Vagina (tissue), 2 donors: ENCODE measurements at regions of chr4 and their contacts with region 1.

Region 1: GRCh38 chr4:25234390-25235370 is 847 bp downstream of the PI4K2B start:
- DNase-seq: no peak
- H3K4me3 ChIP-seq: peak overlapping the region; percentile 73 to 97
- H3K27ac ChIP-seq: peak overlapping the region; percentile 99
- H3K4me1 ChIP-seq: peaks cover 14% of the 10 kb centered on the region
- H3K27me3 ChIP-seq: no peaks in the 10 kb centered on the region
- CTCF ChIP-seq: peak in 2 of 3 experiments; percentile 2 to 47
- POLR2A ChIP-seq: no peak

Region 2: GRCh38 chr4:25159884-25160713 is 74.6 kb before region 1 on chr4 and contains the start of gene SEPSECS:
- intact Hi-C with region 1: loop called (anchors 5 kb)
- DNase-seq: peak; percentile 97 to 98
- H3K4me3 ChIP-seq: peak within 1 kb of the TSS; percentile 69 to 82
- H3K27ac ChIP-seq: peak within 1 kb of the TSS; percentile 89
- H3K4me1 ChIP-seq: peaks cover 23% of the 10 kb centered on the region
- H3K27me3 ChIP-seq: no peaks in the 10 kb centered on the region
- CTCF ChIP-seq: no peak
- POLR2A ChIP-seq: no peak
- total RNA-seq, gene SEPSECS: 4.2 TPM